Naive thymus-derived CD4-positive, alpha-beta T cell (primary cell): ENCODE measurements at regions of chr15 and their contacts with region 1.

Region 1: GRCh38 chr15:100341662-100342560 is at the start of gene ADAMTS17:
- DNase-seq: peak; percentile 80 to 96 (median 94)
- ATAC-seq: peak; percentile 98
- H3K4me3 ChIP-seq: peak within 1 kb of the TSS; percentile 69
- H3K4me3 Mint-ChIP-seq: peak within 1 kb of the TSS; percentile 59 to 88 (median 76)
- H3K27ac ChIP-seq: peak within 1 kb of the TSS; percentile 76
- H3K27ac Mint-ChIP-seq: peak within 1 kb of the TSS in 6 of 9 donors; percentile 6 to 76 (median 29)
- H3K4me1 ChIP-seq: peaks cover 4 to 6% of the 10 kb centered on the region in 2 donors
- H3K4me1 Mint-ChIP-seq: peaks cover 7 to 36% (median 28%) of the 10 kb centered on the region in 7 donors
- H3K27me3 ChIP-seq: no peaks in the 10 kb centered on the region
- H3K27me3 Mint-ChIP-seq: peaks cover 0 to 57% (median 4%) of the 10 kb centered on the region in 5 donors
- total RNA-seq, gene ADAMTS17: 2.0 to 13.5 (median 3.2) TPM

Region 2: DNA sequence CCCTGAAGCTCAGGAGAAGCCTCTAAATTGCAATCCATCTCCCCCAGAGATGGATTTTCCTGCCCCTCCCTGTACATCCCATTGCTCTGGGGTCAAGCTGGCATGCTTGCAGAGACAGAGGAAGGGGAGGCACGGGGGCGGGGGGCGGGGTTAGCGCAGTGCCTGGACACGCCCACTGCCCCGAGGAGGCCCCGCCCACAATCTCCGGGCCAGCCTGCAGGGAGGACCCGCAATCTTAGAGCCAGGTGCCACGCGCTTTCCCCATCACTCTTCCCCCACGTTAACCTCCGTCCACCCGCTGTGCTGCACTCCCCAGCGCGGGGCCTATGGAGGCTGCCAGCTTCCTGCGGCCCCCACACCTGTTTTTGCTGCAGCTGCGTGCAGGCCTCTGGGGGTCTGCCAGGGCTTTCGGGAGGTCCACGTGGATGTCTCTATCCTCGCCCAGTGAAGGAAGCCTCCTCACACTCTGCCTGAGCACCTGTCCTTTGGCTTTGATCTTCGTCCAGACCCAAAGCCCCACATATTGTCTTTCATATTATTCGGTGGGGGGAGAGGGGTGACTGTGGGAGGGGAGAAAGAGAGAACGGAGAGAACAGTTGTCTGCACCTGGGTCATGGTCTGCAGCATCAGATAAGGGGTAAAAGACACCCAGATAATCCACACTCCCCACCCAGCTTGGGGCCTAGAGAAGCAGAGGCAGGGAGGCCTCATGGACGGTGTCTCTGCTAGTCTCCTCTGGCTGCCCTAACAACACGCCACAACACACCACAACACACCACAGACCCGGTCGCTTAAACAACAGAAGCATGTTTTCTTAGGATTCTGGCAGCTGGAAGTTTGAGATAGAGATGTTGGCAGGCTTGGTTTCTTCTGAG is 894.2 kb before region 1 on chr15:
- CTCF ChIA-PET with region 1: no interaction called
- POLR2A ChIA-PET with region 1: no interaction called
- intact Hi-C with region 1: loop called in 1 of 2 experiments (anchors 5 kb)
- DNase-seq: peak in 1 of 9 donors; percentile 21
- ATAC-seq: no peak
- H3K4me3 ChIP-seq: no peak overlapping the region
- H3K4me3 Mint-ChIP-seq: peak overlapping the region in 8 of 10 donors; percentile 15 to 53 (median 50)
- H3K27ac ChIP-seq: no peak overlapping the region
- H3K27ac Mint-ChIP-seq: peak overlapping the region in 8 of 9 donors; percentile 19 to 91 (median 56)
- H3K4me1 ChIP-seq: peaks cover 0 to 53% of the 10 kb centered on the region in 2 donors
- H3K4me1 Mint-ChIP-seq: peaks cover 33 to 89% (median 68%) of the 10 kb centered on the region in 7 donors
- H3K27me3 ChIP-seq: no peaks in the 10 kb centered on the region
- H3K27me3 Mint-ChIP-seq: peaks cover 0 to 14% (median 0%) of the 10 kb centered on the region in 5 donors

Region 3: GRCh38 chr15:100041127-100041828 is 300.6 kb before region 1 on chr15:
- CTCF ChIA-PET with region 1: no interaction called
- POLR2A ChIA-PET with region 1: no interaction called
- intact Hi-C with region 1: loop called in 1 of 2 experiments (anchors 2 kb)
- DNase-seq: no peak
- ATAC-seq: no peak
- H3K4me3 ChIP-seq: no peak overlapping the region
- H3K4me3 Mint-ChIP-seq: no peak overlapping the region
- H3K27ac ChIP-seq: no peak overlapping the region
- H3K27ac Mint-ChIP-seq: no peak overlapping the region
- H3K4me1 ChIP-seq: no peaks in the 10 kb centered on the region
- H3K4me1 Mint-ChIP-seq: peaks cover 0 to 14% (median 0%) of the 10 kb centered on the region in 7 donors
- H3K27me3 ChIP-seq: no peaks in the 10 kb centered on the region
- H3K27me3 Mint-ChIP-seq: peaks cover 0 to 4% (median 0%) of the 10 kb centered on the region in 5 donors

Region 4: DNA sequence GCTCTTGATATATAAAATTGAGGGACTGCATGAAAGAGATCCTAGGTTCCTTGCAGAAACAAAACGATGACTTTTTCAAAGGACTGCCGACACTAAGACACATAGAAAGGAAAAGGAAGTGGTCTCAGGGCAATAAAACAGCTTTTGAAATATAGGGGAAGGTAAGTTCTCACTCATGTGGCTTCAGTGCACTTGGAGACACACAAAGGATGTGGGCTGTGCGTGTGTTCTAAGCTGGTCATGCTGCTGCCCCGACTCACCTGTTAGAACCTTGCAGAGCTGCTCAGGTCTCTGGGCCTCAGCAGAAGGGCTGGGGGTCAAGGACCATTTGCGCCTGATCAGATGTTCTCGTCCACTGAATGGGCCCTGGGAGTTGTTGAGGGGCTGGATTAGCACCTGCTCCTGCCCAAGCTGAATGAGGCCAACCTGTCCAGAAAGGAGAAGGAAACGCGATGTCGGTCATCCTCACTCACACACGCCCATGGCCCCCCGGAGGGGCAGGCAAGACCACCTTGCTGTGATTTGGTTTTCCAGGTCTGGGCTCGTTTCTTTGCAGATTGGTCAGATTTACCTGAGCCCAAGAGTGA is 11.2 kb before region 1 on chr15:
- CTCF ChIA-PET with region 1: interaction called, 17 read pairs
- POLR2A ChIA-PET with region 1: interaction called, 13 read pairs
- intact Hi-C with region 1: loop called (anchors 1 kb)
- DNase-seq: peak in 7 of 9 donors; percentile 22 to 84 (median 79)
- ATAC-seq: peak; percentile 89
- H3K4me3 ChIP-seq: peak overlapping the region; percentile 43
- H3K4me3 Mint-ChIP-seq: peak overlapping the region; percentile 45 to 89 (median 78)
- H3K27ac ChIP-seq: peak overlapping the region; percentile 24
- H3K27ac Mint-ChIP-seq: peak overlapping the region; percentile 11 to 77 (median 70)
- H3K4me1 ChIP-seq: peaks cover 58 to 66% of the 10 kb centered on the region in 2 donors
- H3K4me1 Mint-ChIP-seq: peaks cover 41 to 87% (median 74%) of the 10 kb centered on the region in 7 donors
- H3K27me3 ChIP-seq: no peaks in the 10 kb centered on the region
- H3K27me3 Mint-ChIP-seq: peaks cover 0 to 10% (median 0%) of the 10 kb centered on the region in 5 donors

Region 5: GRCh38 chr15:100602064-100602822 is 260.3 kb after region 1 on chr15 and contains the starts of genes ASB7 and LINS1:
- CTCF ChIA-PET with region 1: interaction called, 4 read pairs
- POLR2A ChIA-PET with region 1: interaction called, 4 read pairs
- intact Hi-C with region 1: loop called (anchors 1 kb)
- DNase-seq: peak; percentile 97 to 100 (median 100)
- ATAC-seq: peak; percentile 97
- H3K4me3 ChIP-seq: peak within 1 kb of the TSS; percentile 97
- H3K4me3 Mint-ChIP-seq: no peak within 1 kb of the TSS
- H3K27ac ChIP-seq: peak within 1 kb of the TSS; percentile 91
- H3K27ac Mint-ChIP-seq: peak within 1 kb of the TSS in 6 of 9 donors; percentile 50 to 95 (median 85)
- H3K4me1 ChIP-seq: peaks cover 35 to 52% of the 10 kb centered on the region in 2 donors
- H3K4me1 Mint-ChIP-seq: peaks cover 32 to 68% (median 41%) of the 10 kb centered on the region in 7 donors
- H3K27me3 ChIP-seq: no peaks in the 10 kb centered on the region
- H3K27me3 Mint-ChIP-seq: no peaks in the 10 kb centered on the region
- total RNA-seq, gene ASB7: 15.4 to 27.2 (median 18.9) TPM
- total RNA-seq, gene LINS1: 50.7 to 116 (median 76.9) TPM

Region 6: DNA sequence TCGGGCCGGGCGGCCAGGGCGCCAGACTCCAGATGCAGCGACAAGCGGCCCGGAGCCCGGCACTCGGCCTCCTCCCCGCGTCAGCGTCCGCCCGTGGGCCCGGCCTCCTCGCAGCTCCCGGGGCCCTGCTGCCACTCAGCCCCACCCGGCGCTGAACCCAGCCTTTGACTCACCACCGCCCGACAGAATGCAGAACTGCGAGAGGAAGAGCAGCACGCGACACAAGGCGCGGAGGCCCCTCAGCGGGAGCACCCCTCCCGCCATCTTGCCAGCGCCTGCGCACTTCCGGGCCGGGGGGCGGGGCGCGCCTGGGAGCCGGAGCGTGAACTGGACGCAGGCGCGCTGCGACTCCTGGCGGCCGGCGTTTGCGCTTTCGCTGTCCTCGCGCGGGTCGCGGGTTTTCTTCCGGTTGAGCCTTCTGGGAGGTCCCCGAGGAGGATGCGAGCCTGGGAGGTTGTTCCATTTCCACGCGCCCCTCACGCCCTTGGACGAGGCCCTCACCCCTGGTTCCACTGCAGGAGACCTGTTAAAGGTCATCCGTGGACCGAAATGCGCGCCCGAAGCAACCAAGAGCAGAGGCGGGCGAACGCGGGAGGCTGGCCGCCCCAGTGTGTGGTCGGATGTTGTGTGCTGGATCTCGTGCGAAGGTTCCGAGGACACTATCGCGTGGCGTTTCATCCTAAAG is 1310.3 kb after region 1 on chr15 and contains the start of gene TM2D3:
- CTCF ChIA-PET with region 1: no interaction called
- POLR2A ChIA-PET with region 1: no interaction called
- intact Hi-C with region 1: loop called in 1 of 2 experiments (anchors 5 kb)
- DNase-seq: peak; percentile 92 to 98 (median 96)
- ATAC-seq: peak; percentile 96
- H3K4me3 ChIP-seq: peak within 1 kb of the TSS; percentile 99
- H3K4me3 Mint-ChIP-seq: peak within 1 kb of the TSS; percentile 88 to 95 (median 94)
- H3K27ac ChIP-seq: peak within 1 kb of the TSS; percentile 91
- H3K27ac Mint-ChIP-seq: peak within 1 kb of the TSS; percentile 87 to 98 (median 96)
- H3K4me1 ChIP-seq: peaks cover 19 to 26% of the 10 kb centered on the region in 2 donors
- H3K4me1 Mint-ChIP-seq: peaks cover 16 to 53% (median 35%) of the 10 kb centered on the region in 7 donors
- H3K27me3 ChIP-seq: no peaks in the 10 kb centered on the region
- H3K27me3 Mint-ChIP-seq: no peaks in the 10 kb centered on the region
- total RNA-seq, gene TM2D3: 54.4 to 105 (median 87.9) TPM